Common myeloid progenitor, CD34-positive (primary cell): ENCODE measurements at regions of chr11 and their contacts with region 1.

Region 1: GRCh38 chr11:765025-765801 is 12.1 kb downstream of the GATD1 start:
- DNase-seq: peak; percentile 83 to 92 (median 87)
- H3K4me3 ChIP-seq: no peak overlapping the region
- H3K27ac ChIP-seq: no peak overlapping the region
- H3K4me1 ChIP-seq: no peaks in the 10 kb centered on the region
- H3K27me3 ChIP-seq: no peaks in the 10 kb centered on the region

Region 2: GRCh38 chr11:662689-663274 is 102.4 kb before region 1 on chr11:
- CTCF ChIA-PET with region 1: interaction called, 22 read pairs
- POLR2A ChIA-PET with region 1: no interaction called
- DNase-seq: peak; percentile 43 to 55 (median 50)
- H3K4me3 ChIP-seq: no peak overlapping the region
- H3K27ac ChIP-seq: no peak overlapping the region
- H3K4me1 ChIP-seq: peaks cover 0 to 8% (median 0%) of the 10 kb centered on the region in 4 experiments
- H3K27me3 ChIP-seq: no peaks in the 10 kb centered on the region

Region 3: DNA sequence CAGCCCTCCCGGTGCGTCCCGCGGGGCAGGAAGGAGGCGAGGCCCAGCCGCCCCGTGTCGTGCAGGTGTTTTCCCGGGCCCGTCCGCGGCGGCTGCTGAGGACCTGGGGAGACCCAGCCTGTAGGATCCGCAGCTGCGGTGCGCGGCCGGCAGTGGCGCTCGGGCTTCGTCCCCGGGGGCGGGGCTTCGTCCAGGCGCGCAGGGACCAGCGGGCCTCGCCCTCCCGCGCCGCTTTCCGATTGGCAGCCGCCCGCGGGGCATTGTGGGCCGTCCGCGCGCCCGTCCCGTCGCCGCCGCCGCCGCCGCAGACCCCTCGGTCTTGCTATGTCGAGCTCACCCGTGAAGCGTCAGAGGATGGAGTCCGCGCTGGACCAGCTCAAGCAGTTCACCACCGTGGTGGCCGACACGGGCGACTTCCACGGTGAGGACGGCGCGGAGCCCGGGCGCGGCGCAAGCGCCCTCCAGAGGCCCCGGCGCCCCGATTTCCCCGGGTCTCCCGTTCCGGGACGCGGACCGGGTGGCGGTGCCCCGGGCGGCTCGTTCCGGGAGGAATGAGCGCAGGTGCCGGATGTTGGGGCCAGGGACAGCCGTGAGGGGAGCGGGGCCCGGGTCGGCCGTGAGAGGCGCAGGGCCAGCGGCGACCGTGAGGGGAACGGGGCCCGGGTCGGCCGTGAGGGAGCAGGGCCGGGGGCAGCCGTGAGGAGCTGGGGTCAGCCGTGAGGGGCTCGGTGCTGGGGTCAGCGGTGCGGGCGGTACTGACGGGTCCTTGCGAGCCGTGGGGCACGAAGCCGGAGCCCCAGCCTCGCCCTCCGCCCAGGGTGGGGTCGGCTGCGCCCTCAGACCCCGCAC is 17.8 kb before region 1 on chr11 and contains the start of gene TALDO1:
- CTCF ChIA-PET with region 1: interaction called, 22 read pairs
- POLR2A ChIA-PET with region 1: interaction called, 3 read pairs
- DNase-seq: peak; percentile 86 to 93 (median 92)
- H3K4me3 ChIP-seq: peak within 1 kb of the TSS; percentile 69 to 100 (median 93)
- H3K27ac ChIP-seq: peak within 1 kb of the TSS; percentile 91 to 99
- H3K4me1 ChIP-seq: peaks cover 7 to 56% (median 42%) of the 10 kb centered on the region in 4 experiments
- H3K27me3 ChIP-seq: no peaks in the 10 kb centered on the region